ENCODE measurements at regions of chr12 and their contacts with region 1.

Region 1: GRCh38 chr12:3261782-3262359 is 184.7 kb downstream of the TSPAN9 start:
- DNase-seq: no peak
- H3K4me3 ChIP-seq: no peak overlapping the region
- H3K27ac ChIP-seq: no peak overlapping the region
- H3K4me1 ChIP-seq: peaks cover 6% of the 10 kb centered on the region
- H3K27me3 ChIP-seq: no peaks in the 10 kb centered on the region
- CTCF ChIP-seq: no peak
- EP300 ChIP-seq: no peak
- POLR2A ChIP-seq: no peak

Region 2: GRCh38 chr12:3141339-3142321 is 120.2 kb before region 1 on chr12:
- intact Hi-C with region 1: loop called in 1 of 4 experiments (anchors 5 kb)
- DNase-seq: no peak
- H3K4me3 ChIP-seq: no peak overlapping the region
- H3K27ac ChIP-seq: no peak overlapping the region
- H3K4me1 ChIP-seq: peaks cover 30% of the 10 kb centered on the region
- H3K27me3 ChIP-seq: no peaks in the 10 kb centered on the region
- CTCF ChIP-seq: no peak
- EP300 ChIP-seq: no peak
- POLR2A ChIP-seq: no peak

Region 3: DNA sequence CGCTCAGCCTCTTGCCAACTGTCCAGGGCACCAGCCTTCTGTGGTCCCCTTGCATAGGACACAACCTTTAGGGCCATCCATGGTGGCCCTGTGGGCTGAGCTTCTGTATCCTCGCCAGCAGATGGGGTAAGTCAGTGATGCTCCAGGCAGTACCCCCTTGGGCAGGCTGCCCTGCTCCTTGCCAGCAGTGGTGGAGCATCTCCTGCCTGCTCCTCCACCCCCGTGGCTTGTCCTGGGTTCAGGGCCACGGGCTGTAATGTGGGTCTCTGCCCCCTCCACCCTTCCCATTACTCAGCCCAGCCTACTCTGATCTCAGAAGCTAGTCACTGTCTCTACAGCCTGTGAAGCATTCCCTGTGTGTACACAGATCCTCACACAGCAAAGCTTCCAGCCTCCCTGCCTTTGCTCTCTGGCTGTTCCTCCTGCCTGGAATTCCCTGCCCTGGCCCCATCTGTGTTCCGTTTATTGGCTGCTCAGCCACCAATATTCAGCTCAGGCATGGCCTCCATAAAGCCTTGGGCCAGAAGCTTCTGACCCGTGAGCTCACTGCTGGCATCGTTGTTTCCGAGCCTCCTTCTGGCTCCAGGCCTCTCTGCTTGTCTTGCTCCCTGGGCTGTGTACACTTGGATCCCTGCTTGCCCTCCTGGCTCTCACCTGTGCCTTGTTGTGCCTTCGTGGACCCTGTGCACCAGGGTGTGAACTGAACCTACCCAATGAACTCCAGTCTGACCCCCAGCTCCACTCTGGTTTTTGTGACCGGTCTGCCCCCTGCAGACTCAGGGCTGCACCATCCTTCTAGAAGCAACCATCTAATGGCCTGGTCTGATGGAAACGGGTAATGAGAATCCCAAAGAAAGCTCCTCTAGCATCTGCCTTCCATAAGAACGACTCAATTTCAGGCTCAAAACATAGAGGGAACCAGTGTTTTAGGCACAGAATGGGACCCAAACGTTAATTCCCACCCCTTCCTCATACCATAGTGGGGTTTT is 52.1 kb after region 1 on chr12:
- intact Hi-C with region 1: no loop called
- DNase-seq: peak in 1 of 5 donors; percentile 46
- H3K4me3 ChIP-seq: no peak overlapping the region
- H3K27ac ChIP-seq: no peak overlapping the region
- H3K4me1 ChIP-seq: peaks cover 3% of the 10 kb centered on the region
- H3K27me3 ChIP-seq: no peaks in the 10 kb centered on the region
- CTCF ChIP-seq: no peak
- EP300 ChIP-seq: no peak
- POLR2A ChIP-seq: no peak

Region 4: DNA sequence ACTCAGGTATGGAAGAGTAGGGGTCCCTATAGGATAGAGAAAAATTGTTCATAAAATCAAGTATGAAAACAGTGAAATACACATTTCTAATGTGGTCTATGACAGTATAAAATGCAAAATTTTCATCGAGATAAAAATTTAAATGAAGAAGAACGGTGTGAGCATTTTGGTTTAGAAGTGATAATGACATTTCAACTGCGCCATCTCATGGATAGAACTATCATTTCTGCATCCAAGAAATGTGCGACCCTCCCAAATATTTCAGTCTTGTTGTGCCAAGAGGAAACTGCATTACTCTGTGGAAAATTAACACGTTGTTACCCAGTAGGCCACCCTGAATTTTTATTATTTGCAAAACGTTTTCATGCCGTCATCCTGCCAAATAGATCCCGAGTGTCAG is 382.2 kb after region 1 on chr12:
- intact Hi-C with region 1: no loop called
- DNase-seq: no peak
- H3K4me3 ChIP-seq: no peak overlapping the region
- H3K27ac ChIP-seq: no peak overlapping the region
- H3K4me1 ChIP-seq: peaks cover 2% of the 10 kb centered on the region
- H3K27me3 ChIP-seq: no peaks in the 10 kb centered on the region
- CTCF ChIP-seq: peak in 1 of 3 donors; percentile 27
- EP300 ChIP-seq: no peak
- POLR2A ChIP-seq: no peak

Measured in ovary (tissue), 10 donors.